ENCODE measurements at regions of chr13 and their contacts with region 1.

Region 1: GRCh38 chr13:26186118-26186870 is 35.8 kb downstream of the RNF6 start:
- DNase-seq: peak; percentile 48 to 90
- H3K4me3 ChIP-seq: peak overlapping the region; percentile 66 to 93
- H3K27ac ChIP-seq: peak overlapping the region; percentile 81 to 82
- H3K4me1 ChIP-seq: peaks cover 0 to 7% of the 10 kb centered on the region in 2 donors
- H3K27me3 ChIP-seq: no peaks in the 10 kb centered on the region
- CTCF ChIP-seq: peak; percentile 21 to 33 (median 23)

Region 2: DNA sequence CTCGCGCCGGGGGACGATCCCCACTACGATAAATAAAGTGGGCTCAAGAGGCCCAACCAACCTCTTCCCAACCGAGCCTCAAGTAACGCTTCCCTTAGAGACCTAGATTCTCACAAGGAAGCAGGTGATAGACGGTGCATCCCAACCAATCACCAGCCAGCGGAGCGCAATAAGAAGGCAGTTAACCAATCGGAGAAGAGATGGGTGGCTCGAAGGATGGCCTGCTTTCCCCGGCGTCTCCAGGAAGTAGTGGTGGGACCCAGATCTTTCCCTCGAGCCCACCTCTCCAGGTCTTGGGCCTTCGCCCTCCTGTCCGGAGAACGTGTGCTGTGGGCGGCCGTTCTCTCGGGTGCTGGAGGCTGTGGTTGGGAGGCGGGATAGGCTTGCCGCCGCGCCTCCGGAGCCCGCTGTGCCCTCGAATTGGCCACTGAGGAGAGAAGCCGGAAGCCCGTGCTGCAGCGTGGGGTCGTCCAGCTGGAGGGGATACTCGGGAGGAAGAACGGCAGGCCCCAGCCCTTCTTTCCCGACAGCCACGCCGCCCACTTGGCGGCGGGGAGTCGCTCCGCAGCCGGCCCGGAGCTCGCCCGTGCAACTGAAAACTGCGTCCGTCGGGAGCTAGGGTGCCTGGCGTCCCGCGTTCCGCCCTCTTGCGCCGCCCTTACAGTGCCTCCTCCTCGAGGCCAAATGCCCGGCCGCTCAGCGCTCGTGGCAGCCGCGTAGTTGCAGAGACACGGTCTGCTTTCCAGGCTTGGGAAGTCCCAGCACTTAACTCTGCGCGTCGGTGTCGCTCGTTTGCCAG is 35.6 kb after region 1 on chr13 and contains the start of gene RNF6:
- intact Hi-C with region 1: loop called (anchors 1 kb)
- DNase-seq: peak; percentile 91 to 98
- H3K4me3 ChIP-seq: peak within 1 kb of the TSS; percentile 75 to 76
- H3K27ac ChIP-seq: peak within 1 kb of the TSS; percentile 91 to 97
- H3K4me1 ChIP-seq: peaks cover 0 to 12% of the 10 kb centered on the region in 2 donors
- H3K27me3 ChIP-seq: no peaks in the 10 kb centered on the region
- CTCF ChIP-seq: no peak
- total RNA-seq, gene RNF6: 15.8 TPM

Region 3: GRCh38 chr13:26382366-26382765 is 196.1 kb after region 1 on chr13:
- intact Hi-C with region 1: loop called (anchors 10 kb)
- DNase-seq: no peak
- H3K4me3 ChIP-seq: no peak overlapping the region
- H3K27ac ChIP-seq: no peak overlapping the region
- H3K4me1 ChIP-seq: no peaks in the 10 kb centered on the region
- H3K27me3 ChIP-seq: no peaks in the 10 kb centered on the region
- CTCF ChIP-seq: no peak

Region 4: DNA sequence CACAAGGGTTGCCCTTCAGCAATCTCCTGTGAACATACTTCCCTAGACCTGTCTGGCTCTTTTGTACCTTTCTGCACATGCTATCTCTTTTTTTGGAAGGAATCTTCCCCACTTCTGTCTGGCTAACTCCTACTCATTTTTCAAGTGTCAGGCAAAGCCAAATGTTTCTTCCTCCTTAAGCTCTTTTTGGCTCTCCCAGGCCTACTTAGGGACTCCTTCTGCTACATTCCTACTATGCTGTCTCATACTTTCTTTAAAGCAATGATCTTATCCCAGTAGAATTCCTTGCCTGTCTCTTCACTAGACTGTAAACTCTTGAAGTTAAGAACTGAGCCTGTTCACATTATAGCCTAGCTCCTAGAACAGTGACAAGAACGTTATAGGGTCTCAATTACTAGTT is 256.2 kb after region 1 on chr13:
- intact Hi-C with region 1: no loop called
- DNase-seq: no peak
- H3K4me3 ChIP-seq: no peak overlapping the region
- H3K27ac ChIP-seq: peak overlapping the region; percentile 17 to 36
- H3K4me1 ChIP-seq: no peaks in the 10 kb centered on the region
- H3K27me3 ChIP-seq: no peaks in the 10 kb centered on the region
- CTCF ChIP-seq: no peak

Region 5: GRCh38 chr13:26557393-26558023 is 371.2 kb after region 1 on chr13 and contains the start of gene WASF3:
- intact Hi-C with region 1: loop called (anchors 5 kb)
- DNase-seq: peak; percentile 36 to 94
- H3K4me3 ChIP-seq: peak within 1 kb of the TSS; percentile 70 to 89
- H3K27ac ChIP-seq: peak within 1 kb of the TSS in 1 of 2 donors; percentile 59
- H3K4me1 ChIP-seq: peaks cover 6 to 7% of the 10 kb centered on the region in 2 donors
- H3K27me3 ChIP-seq: no peaks in the 10 kb centered on the region
- CTCF ChIP-seq: peak in 1 of 3 experiments; percentile 6
- total RNA-seq, gene WASF3: 14.3 TPM

Region 6: GRCh38 chr13:26698392-26699196 is 512.3 kb after region 1 on chr13:
- intact Hi-C with region 1: loop called (anchors 1 kb)
- DNase-seq: peak in 1 of 2 donors; percentile 90
- H3K4me3 ChIP-seq: peak overlapping the region; percentile 39 to 44
- H3K27ac ChIP-seq: no peak overlapping the region
- H3K4me1 ChIP-seq: no peaks in the 10 kb centered on the region
- H3K27me3 ChIP-seq: no peaks in the 10 kb centered on the region
- CTCF ChIP-seq: peak; percentile 84 to 97 (median 95)